Head of caudate nucleus (tissue), 42 donors: ENCODE measurements at regions of chr11 and their contacts with region 1.

Region 1: DNA sequence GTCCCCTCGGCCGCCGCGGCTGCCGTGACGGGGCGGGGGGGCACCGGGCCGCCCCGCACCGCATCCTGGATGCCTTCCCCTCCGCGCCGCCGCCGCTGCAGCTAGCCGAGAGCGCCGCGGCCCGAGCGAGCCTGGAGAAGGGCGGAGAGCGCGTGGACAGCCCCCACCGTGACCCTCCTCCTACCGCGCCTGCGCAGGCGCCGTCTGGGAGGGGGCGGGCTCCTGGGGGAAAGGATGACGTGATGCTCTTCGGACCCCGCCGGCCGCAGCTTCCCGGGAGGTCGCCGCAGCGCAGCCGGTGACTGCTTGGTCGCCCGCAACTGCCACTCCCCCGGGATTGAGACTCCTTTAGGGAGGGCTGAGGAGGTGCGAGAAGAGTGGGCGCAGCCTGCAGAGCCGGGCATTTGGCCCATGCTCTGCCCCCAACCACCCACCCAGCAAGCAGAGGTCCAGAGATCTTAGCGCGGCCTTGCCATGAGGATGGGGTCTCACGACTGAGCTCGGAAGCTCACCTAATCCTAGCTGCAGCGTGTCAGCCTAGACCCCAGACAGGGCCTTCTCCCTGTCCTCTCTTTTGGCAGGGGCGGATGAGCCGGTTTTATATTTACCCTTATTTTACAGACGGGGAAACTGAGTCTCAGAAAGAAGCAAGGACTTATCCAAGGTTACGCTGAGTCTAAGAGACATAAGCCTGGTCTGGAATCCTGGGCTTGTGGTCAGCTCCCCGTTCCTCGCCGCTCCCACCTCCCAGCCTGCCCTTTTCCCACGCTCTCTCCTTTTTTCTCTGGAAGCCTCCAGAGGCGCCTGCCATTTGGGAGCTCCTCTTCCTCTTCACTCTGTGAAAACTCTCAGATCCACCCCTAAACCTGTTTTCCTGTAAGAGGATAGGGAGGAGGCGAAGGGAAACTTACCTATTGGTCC is at the start of gene DENND5A:
- DNase-seq: peak; percentile 67 to 95 (median 90)

Region 2: DNA sequence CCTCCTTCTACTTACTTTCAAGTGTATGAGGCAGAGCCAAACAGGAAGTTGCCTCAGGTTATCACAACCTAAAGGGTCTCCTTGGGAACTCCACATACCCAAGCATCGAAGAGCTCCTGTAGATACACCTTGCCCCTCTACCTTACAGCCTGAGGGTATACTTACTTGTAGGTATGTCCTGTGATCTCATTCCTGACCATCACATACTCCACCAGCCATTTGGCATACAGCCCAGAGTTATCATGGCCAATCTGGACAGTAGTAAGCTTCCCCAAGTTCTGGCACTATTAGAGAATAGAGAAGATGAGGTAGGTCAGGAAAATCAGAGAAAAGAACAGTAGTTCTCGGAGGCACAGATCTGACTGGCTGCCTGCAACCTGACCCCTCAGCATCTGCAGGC is 120.6 kb before region 1 on chr11:
- intact Hi-C with region 1: loop called (anchors 10 kb)
- DNase-seq: no peak

Region 3: GRCh38 chr11:9193321-9193720 is 72.2 kb before region 1 on chr11:
- intact Hi-C with region 1: no loop called
- DNase-seq: no peak

Region 4: DNA sequence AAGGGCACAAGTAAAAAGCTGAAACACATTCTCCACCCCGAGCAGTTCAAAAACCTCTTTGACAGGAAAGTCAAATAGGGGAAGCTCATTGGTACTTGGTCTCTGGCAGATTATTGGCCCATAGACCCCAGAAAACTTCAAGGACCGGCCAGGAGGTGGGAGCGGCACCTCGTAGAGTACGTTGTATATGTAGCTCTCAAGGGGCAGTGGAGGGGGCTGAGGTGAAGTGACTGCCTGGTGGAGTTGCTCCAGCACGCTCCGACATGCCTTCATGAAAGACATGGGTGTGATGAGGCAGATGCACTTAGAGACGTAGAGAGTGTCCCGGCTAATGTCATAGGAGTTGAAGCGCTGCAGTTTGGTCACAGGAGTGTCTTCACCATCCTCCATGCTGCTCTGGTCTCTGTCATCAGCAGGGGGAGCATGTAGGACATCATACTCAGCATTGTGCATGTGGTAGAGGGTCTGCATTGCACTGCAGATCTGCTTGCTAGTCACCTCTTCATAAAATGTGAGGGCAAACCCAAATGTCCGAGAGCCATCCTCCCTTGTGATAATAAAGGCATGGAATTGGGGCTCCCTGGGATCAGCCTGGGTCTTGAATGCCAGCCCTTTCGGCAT is 61.7 kb before region 1 on chr11:
- intact Hi-C with region 1: loop called (anchors 10 kb)
- DNase-seq: peak in 37 of 42 donors; percentile 5 to 80 (median 45)

Region 5: DNA sequence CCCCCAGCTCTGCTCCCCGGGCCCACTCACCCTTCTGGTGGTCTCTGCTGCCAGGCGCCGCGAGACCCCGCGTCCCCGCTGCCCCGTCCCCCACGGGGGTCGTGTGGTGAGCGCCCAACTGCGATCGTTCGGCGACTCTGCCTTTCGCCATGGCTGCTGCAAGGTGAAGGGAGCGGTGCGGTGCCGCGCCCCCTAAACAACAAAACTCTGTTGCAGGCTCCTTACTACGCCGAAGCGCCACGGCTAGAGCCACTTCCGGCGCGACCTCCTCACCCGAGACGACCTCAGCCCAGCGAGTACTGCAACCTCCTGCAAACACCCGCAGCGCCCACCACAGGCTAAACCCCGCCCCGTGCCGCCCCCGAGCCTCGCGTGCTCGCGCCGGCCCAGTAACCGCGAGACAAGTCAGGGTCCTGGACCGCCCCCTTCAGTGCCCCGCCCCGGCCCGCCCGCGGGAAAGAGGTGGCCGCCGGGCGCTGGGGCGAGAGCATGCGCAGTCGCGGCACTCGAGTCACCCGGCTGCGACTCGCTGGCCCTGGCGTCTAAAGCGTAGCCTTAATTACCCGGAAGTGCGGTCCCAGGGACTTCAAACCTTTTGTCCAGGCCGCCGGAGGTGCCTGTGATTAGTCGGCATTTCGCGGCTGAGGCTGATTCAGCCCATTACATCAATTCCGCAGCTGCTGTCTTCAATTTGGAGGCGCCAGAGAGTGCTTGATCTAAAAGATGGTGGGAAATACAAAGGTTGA is 49.0 kb after region 1 on chr11 and contains the start of gene TMEM41B:
- intact Hi-C with region 1: loop called (anchors 5 kb)
- DNase-seq: peak; percentile 90 to 99 (median 97)

Region 6: GRCh38 chr11:9363954-9364912 is 98.8 kb after region 1 on chr11:
- intact Hi-C with region 1: loop called (anchors 10 kb)
- DNase-seq: peak; percentile 75 to 97 (median 89)

Region 7: GRCh38 chr11:9573052-9573774 is 307.7 kb after region 1 on chr11 and contains the start of gene WEE1:
- intact Hi-C with region 1: no loop called
- DNase-seq: peak; percentile 85 to 98 (median 94)

Region 8: DNA sequence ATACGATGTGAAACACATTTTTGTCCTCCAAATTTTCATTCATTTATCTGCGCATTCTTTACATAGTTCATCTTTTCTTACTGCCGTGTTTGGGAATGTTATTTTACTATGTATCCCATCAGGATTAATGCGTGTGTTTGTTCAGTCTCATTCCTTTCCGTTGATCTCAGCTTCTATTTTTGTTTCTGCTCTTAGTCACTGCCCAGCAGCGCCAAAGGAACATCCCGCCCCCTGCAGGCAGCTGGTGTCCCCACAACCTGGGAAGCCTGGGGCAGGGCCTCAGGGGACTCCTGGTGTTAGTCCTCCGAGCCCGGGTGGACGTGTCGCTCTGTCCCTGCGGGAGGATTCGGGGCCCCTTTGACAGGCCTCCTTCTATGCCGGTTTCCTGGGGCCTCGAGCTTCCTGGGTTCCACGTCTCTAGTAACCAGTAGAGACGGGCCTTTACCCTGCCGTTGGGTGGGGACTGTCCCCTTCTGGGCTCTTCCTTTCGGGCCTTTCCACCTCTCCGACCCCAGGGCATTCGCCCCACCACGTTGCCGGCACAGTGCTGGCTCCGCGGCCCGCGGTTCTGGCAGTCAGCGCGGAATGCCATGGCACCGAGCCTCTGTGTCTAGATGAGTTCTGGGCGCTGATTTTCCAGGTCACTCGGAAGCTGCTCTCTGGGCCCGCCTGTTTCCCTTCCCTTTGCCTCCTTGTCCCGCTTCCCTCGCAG is 347.8 kb after region 1 on chr11:
- intact Hi-C with region 1: no loop called
- DNase-seq: peak; percentile 87 to 97 (median 94)